ENCODE measurements at regions of chr15 and their contacts with region 1.

Region 1: GRCh38 chr15:50908210-50909009 is at the start of gene AP4E1:
- DNase-seq: peak; percentile 85 to 91
- ATAC-seq: peak; percentile 83
- total RNA-seq, gene AP4E1: 9.9 to 10.7 TPM

Region 2: GRCh38 chr15:50686468-50687301 is 221.7 kb before region 1 on chr15 and contains the start of gene TRPM7:
- intact Hi-C with region 1: loop called in 1 of 2 experiments (anchors 10 kb)
- DNase-seq: peak; percentile 83 to 93
- ATAC-seq: peak; percentile 93
- total RNA-seq, gene TRPM7: 36.8 to 36.9 TPM

Measured in left colon (tissue), 2 donors.